Heart right ventricle (tissue), 16 donors: ENCODE measurements at regions of chr21 and their contacts with region 1.

Region 1: DNA sequence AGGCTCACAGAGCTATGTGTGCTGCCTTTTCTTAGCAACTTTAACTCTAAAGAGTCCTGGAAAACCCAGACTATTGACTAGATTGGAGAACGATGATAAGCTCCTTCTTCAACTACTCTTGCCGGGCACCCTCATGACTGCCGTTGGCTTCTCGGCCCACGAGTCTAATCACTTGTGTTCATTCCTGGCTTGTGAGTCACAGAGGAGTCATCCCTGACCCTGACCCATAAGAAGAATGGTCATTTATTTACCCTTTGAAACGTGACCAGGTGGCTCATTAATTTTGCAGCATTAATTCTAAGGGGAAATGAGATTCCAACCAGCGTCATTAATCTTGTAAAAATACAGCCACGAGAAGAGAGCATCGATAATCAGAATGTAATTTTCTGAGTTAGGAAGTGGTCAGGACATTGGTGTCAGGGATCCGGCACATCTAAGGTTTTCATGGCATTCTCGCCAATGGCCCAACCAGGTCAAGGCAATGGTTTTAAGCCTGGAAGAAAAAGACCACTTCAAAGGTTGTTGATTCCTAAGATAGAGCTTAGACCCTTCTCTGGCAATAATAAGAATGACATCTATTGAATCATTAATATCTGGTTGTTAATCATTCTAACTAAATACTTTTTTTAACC is 183.6 kb upstream of the RUNX1 start:
- DNase-seq: no peak
- ATAC-seq: peak in 3 of 8 donors; percentile 22 to 46 (median 38)
- H3K4me3 ChIP-seq: no peak overlapping the region
- H3K27ac ChIP-seq: no peak overlapping the region
- H3K4me1 ChIP-seq: peaks cover 0 to 9% (median 0%) of the 10 kb centered on the region in 9 donors
- H3K27me3 ChIP-seq: no peaks in the 10 kb centered on the region
- CTCF ChIP-seq: no peak

Region 2: GRCh38 chr21:35179990-35180540 is 52.6 kb before region 1 on chr21:
- intact Hi-C with region 1: loop called in 1 of 10 experiments (anchors 10 kb)
- DNase-seq: no peak
- ATAC-seq: no peak
- H3K4me3 ChIP-seq: no peak overlapping the region
- H3K27ac ChIP-seq: no peak overlapping the region
- H3K4me1 ChIP-seq: peaks cover 0 to 9% (median 0%) of the 10 kb centered on the region in 9 donors
- H3K27me3 ChIP-seq: no peaks in the 10 kb centered on the region
- CTCF ChIP-seq: no peak

Region 3: DNA sequence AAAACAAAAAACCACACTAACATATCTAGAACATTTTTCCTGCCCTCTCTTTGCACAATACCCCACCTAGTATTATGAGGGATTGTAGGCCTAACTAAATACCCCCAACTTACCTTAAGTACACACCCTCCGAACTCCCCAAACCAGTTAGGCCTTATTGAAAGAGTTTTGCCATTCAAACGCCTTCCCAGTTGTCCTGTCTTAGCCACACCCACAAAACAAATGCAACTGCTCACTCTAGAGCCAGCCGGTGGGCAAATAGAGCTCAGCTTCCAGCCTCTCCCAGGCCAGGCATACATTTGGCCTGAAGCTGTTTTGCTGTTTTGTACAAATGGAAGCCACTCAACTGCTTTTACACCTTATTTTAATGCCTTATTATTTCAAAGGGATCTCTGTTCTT is 40.7 kb after region 1 on chr21:
- intact Hi-C with region 1: no loop called
- DNase-seq: no peak
- ATAC-seq: no peak
- H3K4me3 ChIP-seq: no peak overlapping the region
- H3K27ac ChIP-seq: no peak overlapping the region
- H3K4me1 ChIP-seq: no peaks in the 10 kb centered on the region
- H3K27me3 ChIP-seq: peaks cover 0 to 3% (median 0%) of the 10 kb centered on the region in 7 donors
- CTCF ChIP-seq: no peak

Region 4: GRCh38 chr21:35457097-35457804 is 224.6 kb after region 1 on chr21:
- intact Hi-C with region 1: no loop called
- DNase-seq: no peak
- ATAC-seq: no peak
- H3K4me3 ChIP-seq: no peak overlapping the region
- H3K27ac ChIP-seq: no peak overlapping the region
- H3K4me1 ChIP-seq: peaks cover 0 to 10% (median 0%) of the 10 kb centered on the region in 9 donors
- H3K27me3 ChIP-seq: no peaks in the 10 kb centered on the region
- CTCF ChIP-seq: no peak